Calu3 (cell line): ENCODE measurements at regions of chr16 and their contacts with region 1.

Region 1: GRCh38 chr16:58515125-58515870 is at the start of gene SETD6:
- DNase-seq: peak; percentile 94
- H3K4me3 Mint-ChIP-seq: peak within 1 kb of the TSS; percentile 83
- H3K27ac Mint-ChIP-seq: peak within 1 kb of the TSS; percentile 65
- H3K4me1 Mint-ChIP-seq: peaks cover 20% of the 10 kb centered on the region
- H3K27me3 Mint-ChIP-seq: no peaks in the 10 kb centered on the region
- CTCF ChIP-seq: peak; percentile 66
- total RNA-seq, gene SETD6: 42.8 and 46.8 TPM in 2 replicates

Region 2: DNA sequence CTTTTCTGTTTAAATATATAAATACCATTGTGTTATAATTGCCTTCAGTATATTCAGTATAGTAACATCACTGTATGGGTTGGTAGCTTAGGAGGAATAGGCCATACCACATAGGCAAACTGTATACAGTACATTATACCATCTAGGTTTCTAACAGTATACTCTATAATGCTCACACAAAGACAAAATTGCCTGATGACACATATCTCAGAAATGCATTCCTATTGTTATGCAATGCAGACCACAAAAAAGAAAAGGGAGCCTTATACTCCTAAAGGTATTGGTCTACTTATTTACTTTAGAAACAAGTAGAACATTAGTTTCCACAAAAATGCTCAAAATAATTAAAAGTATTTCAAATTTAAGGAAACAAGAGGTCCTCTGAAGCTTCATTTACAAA is 47.9 kb after region 1 on chr16:
- CTCF ChIA-PET with region 1: no interaction called
- intact Hi-C with region 1: no loop called
- DNase-seq: no peak
- H3K4me3 Mint-ChIP-seq: no peak overlapping the region
- H3K27ac Mint-ChIP-seq: no peak overlapping the region
- H3K4me1 Mint-ChIP-seq: peaks cover 9% of the 10 kb centered on the region
- H3K27me3 Mint-ChIP-seq: no peaks in the 10 kb centered on the region
- CTCF ChIP-seq: no peak

Region 3: DNA sequence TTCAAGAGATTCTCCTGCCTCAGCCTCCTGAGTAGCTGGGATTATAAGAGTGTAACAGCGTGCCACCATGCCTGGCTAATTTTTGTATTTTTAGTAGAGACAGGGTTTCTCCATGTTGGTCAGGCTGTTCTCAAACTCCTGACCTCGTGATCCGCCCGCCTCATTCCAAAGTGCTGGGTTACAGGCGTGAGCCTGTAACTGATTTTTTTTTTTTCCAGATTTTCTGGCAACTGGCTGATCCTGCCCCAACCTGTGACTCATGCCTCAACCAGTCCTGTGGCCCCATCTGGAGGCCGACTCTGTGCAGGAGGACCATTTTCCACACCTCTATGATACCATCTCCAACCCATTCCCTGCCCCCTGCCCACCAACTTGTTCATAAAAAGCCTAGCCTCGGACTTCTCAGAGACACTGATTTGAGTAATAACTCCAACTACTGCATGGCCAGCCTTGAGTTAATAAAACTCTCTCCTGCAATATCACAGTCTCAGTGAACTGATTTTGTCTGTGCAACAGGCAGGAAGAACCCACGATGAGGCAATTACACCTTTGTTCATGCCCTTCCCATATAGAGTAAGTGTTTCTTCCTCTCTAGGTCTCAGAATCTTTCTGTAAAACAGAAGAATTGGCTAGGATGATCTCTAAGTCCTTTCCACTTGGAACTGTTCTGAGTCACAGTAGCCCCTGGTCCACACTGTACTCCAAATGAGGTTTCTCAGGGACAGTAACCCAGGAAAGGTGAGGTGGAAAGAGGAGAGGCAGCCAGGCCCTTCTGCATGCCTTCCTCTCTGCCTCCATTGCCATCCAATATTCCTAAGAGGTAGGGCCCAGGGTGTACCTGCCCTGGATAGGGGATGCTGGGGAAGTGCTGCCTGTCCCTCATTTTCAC is 123.1 kb after region 1 on chr16:
- CTCF ChIA-PET with region 1: no interaction called
- intact Hi-C with region 1: loop called (anchors 1 kb)
- DNase-seq: peak; percentile 77
- H3K4me3 Mint-ChIP-seq: no peak overlapping the region
- H3K27ac Mint-ChIP-seq: peak overlapping the region; percentile 38
- H3K4me1 Mint-ChIP-seq: peaks cover 13% of the 10 kb centered on the region
- H3K27me3 Mint-ChIP-seq: no peaks in the 10 kb centered on the region
- CTCF ChIP-seq: peak; percentile 59

Region 4: GRCh38 chr16:58661199-58661830 is 146.0 kb after region 1 on chr16:
- CTCF ChIA-PET with region 1: interaction called, 12 read pairs
- intact Hi-C with region 1: loop called (anchors 1 kb)
- DNase-seq: peak; percentile 66
- H3K4me3 Mint-ChIP-seq: no peak overlapping the region
- H3K27ac Mint-ChIP-seq: no peak overlapping the region
- H3K4me1 Mint-ChIP-seq: no peaks in the 10 kb centered on the region
- H3K27me3 Mint-ChIP-seq: peaks cover 14% of the 10 kb centered on the region
- CTCF ChIP-seq: peak; percentile 59

Region 5: GRCh38 chr16:58755989-58756649 is 240.8 kb after region 1 on chr16:
- CTCF ChIA-PET with region 1: interaction called, 3 read pairs
- intact Hi-C with region 1: loop called (anchors 5 kb)
- DNase-seq: peak; percentile 52
- H3K4me3 Mint-ChIP-seq: no peak overlapping the region
- H3K27ac Mint-ChIP-seq: no peak overlapping the region
- H3K4me1 Mint-ChIP-seq: no peaks in the 10 kb centered on the region
- H3K27me3 Mint-ChIP-seq: peaks cover 31% of the 10 kb centered on the region
- CTCF ChIP-seq: peak; percentile 30

Region 6: DNA sequence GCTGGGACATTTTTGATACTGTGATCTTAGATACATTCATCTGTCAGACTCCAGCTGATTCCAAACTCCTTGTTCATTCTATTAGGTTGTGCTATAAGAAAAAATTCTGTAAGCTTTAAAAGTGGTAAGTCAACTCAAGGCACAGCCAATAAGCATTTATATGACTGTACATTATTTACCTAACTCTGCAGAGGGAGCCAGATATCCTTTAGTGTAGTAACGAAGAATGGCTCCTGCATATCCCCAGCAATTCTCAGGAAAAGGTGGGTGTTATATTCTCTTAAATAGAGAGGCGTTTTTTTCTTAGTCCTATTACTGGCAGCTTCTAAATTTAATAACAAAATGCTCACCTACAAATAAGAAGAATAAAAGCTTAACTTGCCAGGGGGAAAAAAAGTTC is 593.1 kb after region 1 on chr16:
- CTCF ChIA-PET with region 1: no interaction called
- intact Hi-C with region 1: no loop called
- DNase-seq: no peak
- H3K4me3 Mint-ChIP-seq: no peak overlapping the region
- H3K27ac Mint-ChIP-seq: no peak overlapping the region
- H3K4me1 Mint-ChIP-seq: no peaks in the 10 kb centered on the region
- H3K27me3 Mint-ChIP-seq: no peaks in the 10 kb centered on the region
- CTCF ChIP-seq: no peak